Activated CD8-positive, alpha-beta T cell treated with anti-CD3 and anti-CD28 coated beads, Interleukin-2, amount 10 ng/mL, durations not matched to agents 7 days and 5 days (primary cell): ENCODE measurements at regions of chr17 and their contacts with region 1.

Region 1: GRCh38 chr17:49567871-49568694 is 7.6 kb upstream of the NXPH3 start:
- DNase-seq: peak; percentile 88
- ATAC-seq: peak; percentile 50
- H3K4me3 Mint-ChIP-seq: peak overlapping the region; percentile 56
- H3K27ac Mint-ChIP-seq: no peak overlapping the region
- H3K4me1 Mint-ChIP-seq: peaks cover 35% of the 10 kb centered on the region
- H3K27me3 Mint-ChIP-seq: peaks cover 30% of the 10 kb centered on the region

Region 2: GRCh38 chr17:49548051-49548505 is 20.0 kb before region 1 on chr17:
- CTCF ChIA-PET with region 1: no interaction called
- POLR2A ChIA-PET with region 1: no interaction called
- DNase-seq: no peak
- ATAC-seq: no peak
- H3K4me3 Mint-ChIP-seq: no peak overlapping the region
- H3K27ac Mint-ChIP-seq: no peak overlapping the region
- H3K4me1 Mint-ChIP-seq: peaks cover 1% of the 10 kb centered on the region
- H3K27me3 Mint-ChIP-seq: peaks cover 5% of the 10 kb centered on the region

Region 3: GRCh38 chr17:49585422-49586027 is 17.4 kb after region 1 on chr17:
- CTCF ChIA-PET with region 1: no interaction called
- POLR2A ChIA-PET with region 1: no interaction called
- DNase-seq: no peak
- ATAC-seq: no peak
- H3K4me3 Mint-ChIP-seq: no peak overlapping the region
- H3K27ac Mint-ChIP-seq: no peak overlapping the region
- H3K4me1 Mint-ChIP-seq: peaks cover 4% of the 10 kb centered on the region
- H3K27me3 Mint-ChIP-seq: no peaks in the 10 kb centered on the region

Region 4: DNA sequence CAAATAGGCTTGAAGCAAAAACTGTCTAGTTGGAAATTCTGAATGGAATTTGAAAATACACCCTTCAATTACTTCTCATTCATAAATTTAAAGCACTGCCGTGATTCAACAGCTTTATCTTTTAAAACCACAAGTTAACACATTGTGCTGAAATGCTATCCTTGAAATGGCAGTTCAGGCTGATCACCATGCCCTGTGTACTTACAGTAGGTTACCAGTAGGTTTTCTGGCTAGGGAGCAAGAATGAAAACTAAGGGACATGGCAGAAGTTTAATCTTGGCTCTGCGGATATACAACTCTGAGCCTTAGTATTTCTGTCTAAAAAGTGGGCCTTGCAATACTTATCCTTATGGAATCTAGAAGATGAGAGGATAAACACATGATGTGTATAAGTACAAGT is 35.6 kb after region 1 on chr17:
- CTCF ChIA-PET with region 1: interaction called, 15 read pairs
- POLR2A ChIA-PET with region 1: no interaction called
- DNase-seq: no peak
- ATAC-seq: no peak
- H3K4me3 Mint-ChIP-seq: no peak overlapping the region
- H3K27ac Mint-ChIP-seq: no peak overlapping the region
- H3K4me1 Mint-ChIP-seq: peaks cover 8% of the 10 kb centered on the region
- H3K27me3 Mint-ChIP-seq: no peaks in the 10 kb centered on the region

Region 5: DNA sequence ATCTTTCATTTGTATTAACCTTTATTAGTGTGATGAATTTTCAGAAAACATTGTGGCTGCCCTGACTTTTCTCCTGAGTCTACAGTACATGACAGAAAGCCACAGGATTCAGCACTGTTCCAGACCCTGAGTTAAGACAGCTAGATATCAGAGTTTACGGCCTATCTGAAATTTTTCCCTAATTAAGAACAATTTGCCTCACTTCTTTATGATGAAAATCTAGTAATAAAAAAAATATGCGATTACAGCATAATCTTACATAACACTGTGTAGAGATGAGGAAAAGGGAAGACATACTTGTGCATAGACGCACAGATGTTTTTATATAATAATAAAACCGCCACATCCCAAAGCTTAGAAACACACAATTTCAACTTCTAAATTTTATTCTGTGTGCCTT is 102.6 kb after region 1 on chr17:
- CTCF ChIA-PET with region 1: interaction called, 11 read pairs
- POLR2A ChIA-PET with region 1: no interaction called
- DNase-seq: no peak
- ATAC-seq: no peak
- H3K4me3 Mint-ChIP-seq: no peak overlapping the region
- H3K27ac Mint-ChIP-seq: no peak overlapping the region
- H3K4me1 Mint-ChIP-seq: peaks cover 33% of the 10 kb centered on the region
- H3K27me3 Mint-ChIP-seq: no peaks in the 10 kb centered on the region

Region 6: GRCh38 chr17:49677933-49678847 is 110.1 kb after region 1 on chr17 and contains the start of gene SPOP:
- CTCF ChIA-PET with region 1: interaction called, 12 read pairs
- POLR2A ChIA-PET with region 1: no interaction called
- DNase-seq: peak; percentile 100
- ATAC-seq: peak; percentile 86
- H3K4me3 Mint-ChIP-seq: peak within 1 kb of the TSS; percentile 88
- H3K27ac Mint-ChIP-seq: peak within 1 kb of the TSS; percentile 97
- H3K4me1 Mint-ChIP-seq: peaks cover 39% of the 10 kb centered on the region
- H3K27me3 Mint-ChIP-seq: peaks cover 2% of the 10 kb centered on the region
- total RNA-seq, gene SPOP: 49.5 to 52.0 TPM